AG04449 (cell line): ENCODE measurements at regions of chr12 and their contacts with region 1.

Region 1: GRCh38 chr12:103548622-103549601 is 38.2 kb upstream of the STAB2 start:
- DNase-seq: peak; percentile 10
- H3K4me3 ChIP-seq: no peak overlapping the region
- CTCF ChIP-seq: peak; percentile 75

Region 2: DNA sequence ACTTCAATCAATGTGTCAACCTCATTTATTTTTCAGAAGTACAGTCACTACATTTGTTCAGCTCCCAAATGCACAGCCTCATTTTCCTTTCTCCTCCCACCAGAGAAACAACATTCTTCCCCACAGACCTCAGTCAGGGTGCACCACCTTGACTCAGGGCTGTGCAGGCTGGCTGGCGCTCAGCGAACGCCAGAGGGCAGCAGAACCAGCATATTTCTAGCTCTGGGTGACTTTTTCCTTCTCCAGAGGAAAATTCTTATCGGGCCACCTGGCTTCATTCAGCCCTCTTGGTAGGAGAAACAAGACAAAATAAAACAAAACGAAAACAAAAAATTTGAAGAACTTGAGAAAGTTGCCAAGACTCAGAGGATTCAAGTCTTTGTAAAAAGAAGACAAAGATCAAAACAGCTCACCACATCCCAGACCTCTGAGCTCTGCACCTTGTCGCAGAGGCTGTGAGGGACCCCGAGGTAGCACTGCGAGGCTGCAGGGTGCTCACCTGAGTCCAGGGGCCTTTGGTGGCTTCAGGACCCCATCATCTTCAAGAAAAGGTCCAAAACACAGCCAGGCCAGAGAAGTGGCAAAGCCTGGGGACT is 665.6 kb before region 1 on chr12:
- CTCF ChIA-PET with region 1: interaction called, 115 read pairs
- POLR2A ChIA-PET with region 1: interaction called, 4 read pairs
- DNase-seq: no peak
- H3K4me3 ChIP-seq: no peak overlapping the region
- CTCF ChIP-seq: peak; percentile 67

Region 3: GRCh38 chr12:102948941-102949352 is 600.0 kb before region 1 on chr12:
- CTCF ChIA-PET with region 1: interaction called, 129 read pairs
- POLR2A ChIA-PET with region 1: no interaction called
- DNase-seq: no peak
- H3K4me3 ChIP-seq: no peak overlapping the region
- CTCF ChIP-seq: peak; percentile 72

Region 4: GRCh38 chr12:103495479-103496456 is 53.1 kb before region 1 on chr12 and contains the start of gene C12orf42:
- CTCF ChIA-PET with region 1: interaction called, 24 read pairs
- POLR2A ChIA-PET with region 1: no interaction called
- DNase-seq: no peak
- H3K4me3 ChIP-seq: peak within 1 kb of the TSS; percentile 21; the same call in 1 of the 2 replicates
- CTCF ChIP-seq: peak; percentile 51

Region 5: GRCh38 chr12:103530307-103531066 is 18.4 kb before region 1 on chr12:
- CTCF ChIA-PET with region 1: interaction called, 30 read pairs
- POLR2A ChIA-PET with region 1: no interaction called
- DNase-seq: no peak
- H3K4me3 ChIP-seq: no peak overlapping the region
- CTCF ChIP-seq: no peak

Region 6: DNA sequence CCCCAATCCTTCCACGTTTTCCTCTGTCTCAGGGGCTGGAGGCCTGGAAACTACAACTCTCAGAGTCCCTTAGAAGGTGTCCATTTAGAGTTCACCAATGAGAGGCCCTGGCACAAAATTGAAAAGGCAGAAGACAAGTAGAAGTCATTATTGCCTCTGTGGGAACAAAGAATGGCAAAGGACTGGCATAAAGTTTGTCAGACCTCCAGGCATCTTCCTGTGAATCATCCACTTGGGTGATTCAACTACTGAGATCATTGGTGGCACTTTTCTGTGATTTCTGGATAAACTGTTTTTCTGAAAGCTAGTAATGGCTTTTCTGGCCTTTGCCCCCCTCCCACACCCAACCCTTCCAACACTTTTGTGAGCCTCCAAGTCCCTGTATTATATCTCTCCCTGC is 10.5 kb before region 1 on chr12:
- CTCF ChIA-PET with region 1: interaction called, 30 read pairs
- POLR2A ChIA-PET with region 1: no interaction called
- DNase-seq: no peak
- H3K4me3 ChIP-seq: no peak overlapping the region
- CTCF ChIP-seq: no peak

Region 7: GRCh38 chr12:103560604-103561573 is 12.0 kb after region 1 on chr12:
- CTCF ChIA-PET with region 1: interaction called, 59 read pairs
- POLR2A ChIA-PET with region 1: no interaction called
- DNase-seq: peak; percentile 95
- H3K4me3 ChIP-seq: no peak overlapping the region
- CTCF ChIP-seq: no peak